ENCODE measurements at regions of chr5 and their contacts with region 1.

Region 1: GRCh38 chr5:43602461-43603343 is at the start of gene NNT:
- DNase-seq: peak; percentile 55 to 89 (median 72)
- ATAC-seq: peak; percentile 78
- H3K4me3 ChIP-seq: peak within 1 kb of the TSS; percentile 98
- H3K4me3 Mint-ChIP-seq: peak within 1 kb of the TSS; percentile 93
- H3K27ac ChIP-seq: peak within 1 kb of the TSS; percentile 58 to 82
- H3K27ac Mint-ChIP-seq: peak within 1 kb of the TSS; percentile 87
- H3K4me1 ChIP-seq: peaks cover 31% of the 10 kb centered on the region
- H3K4me1 Mint-ChIP-seq: peaks cover 58% of the 10 kb centered on the region
- H3K27me3 ChIP-seq: no peaks in the 10 kb centered on the region
- H3K27me3 Mint-ChIP-seq: no peaks in the 10 kb centered on the region
- CTCF ChIP-seq: no peak
- total RNA-seq, gene NNT: 22.3 to 23.5 TPM

Region 2: DNA sequence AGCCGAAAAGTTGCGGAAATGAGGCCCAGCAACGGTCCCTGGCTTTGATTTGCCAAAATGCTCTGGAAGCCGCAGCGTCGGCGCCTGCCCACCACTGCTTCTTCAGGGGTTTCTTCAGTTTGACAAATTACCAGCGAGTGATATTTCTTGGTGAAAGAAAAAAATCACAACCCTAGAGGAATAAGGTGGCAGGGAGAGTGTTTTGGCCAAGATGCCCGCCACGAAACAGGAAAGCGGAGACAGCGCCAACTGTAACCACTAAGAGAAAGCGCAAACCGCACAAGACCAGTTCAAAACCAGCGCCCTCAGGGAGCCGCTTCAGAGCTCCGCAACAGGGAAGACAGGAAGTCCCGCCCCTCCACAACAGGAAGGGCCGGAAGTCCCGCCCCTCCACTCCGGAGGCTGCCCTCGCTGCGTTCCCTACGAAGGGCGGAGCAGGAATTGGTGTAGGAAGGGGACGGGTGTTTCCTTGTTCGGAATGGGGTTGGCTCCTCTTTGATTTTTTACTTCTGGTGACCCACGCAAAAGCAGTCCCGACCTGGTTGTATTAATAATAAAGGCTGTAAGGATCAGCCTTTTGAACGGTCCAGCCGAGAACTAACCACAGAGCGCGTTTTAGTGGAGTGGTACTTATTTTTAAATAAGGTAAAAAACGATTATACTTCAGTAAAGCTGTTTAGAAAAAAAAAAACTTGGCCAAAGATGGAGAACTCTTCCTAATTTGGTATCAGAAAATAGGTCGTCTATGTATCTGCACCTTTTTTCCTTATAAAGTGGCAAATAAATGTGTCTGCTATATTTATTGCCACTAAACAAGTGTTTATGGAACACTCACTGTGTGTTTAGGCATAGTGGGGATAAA is 87.7 kb before region 1 on chr5 and contains the start of gene C5orf34:
- CTCF ChIA-PET with region 1: no interaction called
- POLR2A ChIA-PET with region 1: interaction called, 10 read pairs
- intact Hi-C with region 1: loop called in 1 of 2 experiments (anchors 10 kb)
- DNase-seq: peak; percentile 88 to 98 (median 93)
- ATAC-seq: peak; percentile 87
- H3K4me3 ChIP-seq: peak within 1 kb of the TSS; percentile 63
- H3K4me3 Mint-ChIP-seq: peak within 1 kb of the TSS; percentile 92
- H3K27ac ChIP-seq: peak within 1 kb of the TSS; percentile 75 to 92
- H3K27ac Mint-ChIP-seq: peak within 1 kb of the TSS; percentile 92
- H3K4me1 ChIP-seq: peaks cover 10% of the 10 kb centered on the region
- H3K4me1 Mint-ChIP-seq: peaks cover 29% of the 10 kb centered on the region
- H3K27me3 ChIP-seq: no peaks in the 10 kb centered on the region
- H3K27me3 Mint-ChIP-seq: no peaks in the 10 kb centered on the region
- CTCF ChIP-seq: no peak
- total RNA-seq, gene C5orf34: 0.88 to 1.2 TPM

Region 3: DNA sequence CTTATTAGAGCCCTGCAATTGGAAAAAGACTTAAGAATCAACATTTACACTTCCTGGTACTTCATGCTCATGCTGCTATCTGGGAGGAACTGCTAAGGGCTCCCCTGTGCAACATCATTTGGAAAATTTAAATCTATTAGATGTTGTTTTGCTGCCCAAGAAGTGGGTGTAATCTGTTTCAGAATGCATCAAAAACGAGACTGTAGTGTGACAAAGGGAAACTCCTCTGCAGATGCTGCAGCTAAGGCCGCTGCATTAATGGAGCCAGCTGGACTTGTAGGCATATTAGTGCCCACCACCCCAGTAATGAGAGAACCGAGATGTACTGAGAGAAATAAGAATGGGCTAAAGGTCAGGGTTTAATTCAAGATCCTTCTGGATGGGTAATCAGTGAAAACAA is 34.7 kb before region 1 on chr5:
- CTCF ChIA-PET with region 1: no interaction called
- POLR2A ChIA-PET with region 1: no interaction called
- intact Hi-C with region 1: no loop called
- DNase-seq: no peak
- ATAC-seq: no peak
- H3K4me3 ChIP-seq: no peak overlapping the region
- H3K4me3 Mint-ChIP-seq: no peak overlapping the region
- H3K27ac ChIP-seq: no peak overlapping the region
- H3K27ac Mint-ChIP-seq: no peak overlapping the region
- H3K4me1 ChIP-seq: no peaks in the 10 kb centered on the region
- H3K4me1 Mint-ChIP-seq: no peaks in the 10 kb centered on the region
- H3K27me3 ChIP-seq: no peaks in the 10 kb centered on the region
- H3K27me3 Mint-ChIP-seq: no peaks in the 10 kb centered on the region
- CTCF ChIP-seq: no peak